Spleen (tissue), 13 donors: ENCODE measurements at regions of chr10 and their contacts with region 1.

Region 1: DNA sequence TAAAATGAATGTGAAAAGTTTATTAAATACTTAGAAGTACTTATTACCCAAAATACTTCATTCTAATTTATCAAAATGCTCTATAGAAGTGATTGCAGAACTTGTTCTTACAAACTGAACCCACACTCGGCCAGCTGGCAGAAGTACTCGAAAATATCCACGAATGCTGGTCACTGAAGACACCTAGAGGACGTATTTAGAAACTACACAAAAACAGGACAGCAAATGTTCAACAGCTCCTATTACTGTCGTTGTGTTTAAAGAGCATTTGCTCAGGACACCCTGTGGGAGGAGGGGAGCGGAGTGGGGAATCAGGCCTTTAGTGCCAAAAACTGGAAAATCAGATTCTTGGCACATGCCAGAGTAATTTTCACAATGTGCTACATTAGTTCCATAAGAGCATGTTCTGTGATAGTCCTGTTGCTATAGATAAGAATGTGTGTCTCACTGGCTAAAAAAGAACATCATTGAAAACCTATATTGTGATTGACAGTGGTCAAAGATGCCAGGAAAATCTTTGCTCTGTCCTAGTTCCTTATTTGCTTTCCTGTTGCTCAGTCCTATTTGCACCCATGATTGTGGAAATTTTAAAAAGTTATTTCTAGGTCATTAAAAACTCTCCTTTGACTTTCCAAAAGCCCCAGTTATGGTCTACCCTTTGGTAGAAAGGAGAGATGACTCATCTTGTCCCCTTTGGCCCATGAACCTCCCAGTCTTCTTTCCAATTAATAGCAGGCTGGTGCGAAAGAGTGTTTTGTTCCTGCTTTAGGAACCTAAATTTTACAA is 49.0 kb upstream of the NRBF2 start:
- DNase-seq: no peak
- H3K4me3 ChIP-seq: no peak overlapping the region
- H3K27ac ChIP-seq: peak overlapping the region in 6 of 8 donors; percentile 14 to 45 (median 27)
- H3K4me1 ChIP-seq: peaks cover 0 to 7% (median 2%) of the 10 kb centered on the region in 6 donors
- H3K27me3 ChIP-seq: no peaks in the 10 kb centered on the region
- CTCF ChIP-seq: peak; percentile 14 to 81 (median 66)
- POLR2A ChIP-seq: no peak

Region 2: GRCh38 chr10:62582804-62583208 is 501.3 kb before region 1 on chr10:
- intact Hi-C with region 1: loop called (anchors 10 kb)
- DNase-seq: no peak
- H3K4me3 ChIP-seq: no peak overlapping the region
- H3K27ac ChIP-seq: peak overlapping the region in 7 of 8 donors; percentile 32 to 62 (median 42)
- H3K4me1 ChIP-seq: peaks cover 0 to 31% (median 2%) of the 10 kb centered on the region in 6 donors
- H3K27me3 ChIP-seq: no peaks in the 10 kb centered on the region
- CTCF ChIP-seq: no peak
- POLR2A ChIP-seq: no peak

Region 3: DNA sequence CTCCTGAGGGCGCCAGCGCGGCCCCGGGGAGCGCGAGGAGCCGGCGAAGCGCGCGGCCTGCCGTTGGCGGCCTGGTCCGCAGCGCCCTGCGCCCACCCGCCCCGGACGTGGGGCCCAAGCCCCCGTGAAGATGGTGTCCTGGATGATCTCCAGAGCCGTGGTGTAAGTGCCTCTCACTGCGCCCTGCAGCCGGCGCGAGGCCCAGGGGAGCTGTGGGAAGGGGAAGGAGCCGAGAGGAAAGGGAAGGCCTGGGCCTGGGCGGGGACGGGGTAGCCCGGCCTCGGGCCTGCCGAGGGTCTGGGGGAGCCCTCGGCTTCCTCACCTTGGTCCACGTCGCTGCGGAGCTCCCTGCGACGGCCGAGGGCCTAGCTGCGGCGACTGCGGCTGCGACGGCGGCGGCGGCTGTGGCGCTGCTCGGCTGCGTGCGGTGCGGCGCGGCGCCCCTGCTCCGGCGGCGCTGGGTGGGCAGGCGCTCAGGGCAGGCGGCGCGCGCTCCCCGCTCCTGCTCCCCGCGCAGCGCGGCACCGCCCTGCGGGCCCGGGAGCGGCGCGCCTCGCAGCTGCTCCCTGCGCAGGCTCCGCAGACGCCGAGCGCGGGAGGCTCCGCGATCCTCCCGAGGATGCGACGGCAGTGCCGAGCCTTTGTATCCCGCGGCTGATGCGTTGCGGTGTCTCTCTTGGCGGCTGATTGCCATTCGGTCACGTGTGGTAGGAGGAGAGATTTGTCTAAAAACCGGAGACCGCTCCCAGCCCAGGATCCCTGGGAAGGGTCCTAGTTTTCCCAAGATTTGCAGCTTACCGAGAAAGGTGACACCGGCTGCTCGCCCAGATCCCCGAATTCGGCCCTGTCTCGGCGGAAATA is 437.5 kb after region 1 on chr10:
- intact Hi-C with region 1: no loop called
- DNase-seq: peak; percentile 93
- H3K4me3 ChIP-seq: peak overlapping the region; percentile 61 to 94 (median 72)
- H3K27ac ChIP-seq: peak overlapping the region; percentile 90 to 98 (median 98)
- H3K4me1 ChIP-seq: peaks cover 19 to 62% (median 48%) of the 10 kb centered on the region in 6 donors
- H3K27me3 ChIP-seq: no peaks in the 10 kb centered on the region
- CTCF ChIP-seq: no peak
- POLR2A ChIP-seq: peak in 2 of 3 donors; percentile 15 to 57